ENCODE measurements at regions of chr5 and their contacts with region 1.

Region 1: GRCh38 chr5:43019614-43020293 is 20.4 kb downstream of the ANXA2R start:
- DNase-seq: peak; percentile 90
- H3K4me3 Mint-ChIP-seq: peak overlapping the region; percentile 97
- H3K27ac Mint-ChIP-seq: peak overlapping the region; percentile 99
- H3K4me1 Mint-ChIP-seq: peaks cover 37% of the 10 kb centered on the region
- H3K27me3 Mint-ChIP-seq: no peaks in the 10 kb centered on the region

Region 2: DNA sequence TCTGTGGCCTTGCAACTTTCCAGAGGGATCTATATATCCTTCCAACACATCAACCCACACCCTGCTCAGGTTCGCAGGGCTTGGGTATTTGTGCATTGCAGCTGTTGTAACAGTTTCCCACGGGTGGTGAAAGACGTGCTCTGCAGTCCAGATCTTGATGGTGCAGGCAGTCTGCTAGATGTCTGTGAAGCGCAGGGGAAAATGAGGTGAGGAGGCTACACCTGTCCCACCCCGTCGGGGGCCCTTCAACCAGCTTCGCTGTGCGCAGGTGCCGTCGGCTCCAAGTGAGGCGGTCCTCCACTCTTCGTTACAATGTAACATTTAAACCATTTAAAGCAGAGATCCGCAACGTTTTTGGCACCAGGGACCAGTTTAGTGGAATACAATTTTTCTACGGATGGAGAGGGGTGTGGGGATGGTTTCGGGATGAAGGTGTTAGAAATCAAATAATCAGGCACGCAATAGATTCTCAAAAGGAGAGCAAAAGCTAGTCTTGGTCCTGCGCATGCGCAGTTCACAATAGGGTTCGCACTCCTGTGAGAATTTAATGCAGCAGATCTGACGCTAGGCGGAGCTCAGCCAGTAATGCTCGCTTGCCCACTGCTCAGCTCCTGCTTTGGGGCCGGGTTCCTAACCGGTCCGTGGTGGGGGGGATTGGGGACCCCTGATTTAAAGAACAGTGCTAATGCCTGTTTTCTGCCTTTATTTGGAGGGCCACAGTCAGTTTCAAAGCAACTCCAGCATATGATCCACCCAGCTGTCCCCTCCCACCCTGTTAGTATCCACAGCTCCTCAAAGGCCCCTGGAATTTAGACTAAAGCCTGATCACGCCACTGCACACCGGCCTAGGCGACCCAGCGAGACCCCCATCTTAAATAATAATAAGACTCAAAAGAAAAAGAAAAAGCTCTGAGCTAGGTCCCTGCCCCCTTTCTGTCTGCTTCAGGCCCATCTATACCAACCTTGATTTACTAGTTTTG is 111.0 kb before region 1 on chr5:
- CTCF ChIA-PET with region 1: interaction called, 15 read pairs
- intact Hi-C with region 1: loop called (anchors 1 kb)
- DNase-seq: peak; percentile 94
- H3K4me3 Mint-ChIP-seq: peak overlapping the region; percentile 92
- H3K27ac Mint-ChIP-seq: peak overlapping the region; percentile 75
- H3K4me1 Mint-ChIP-seq: peaks cover 10% of the 10 kb centered on the region
- H3K27me3 Mint-ChIP-seq: peaks cover 10% of the 10 kb centered on the region

Region 3: GRCh38 chr5:43034591-43034968 is 14.8 kb after region 1 on chr5:
- CTCF ChIA-PET with region 1: interaction called, 57 read pairs
- intact Hi-C with region 1: loop called (anchors 1 kb)
- DNase-seq: no peak
- H3K4me3 Mint-ChIP-seq: no peak overlapping the region
- H3K27ac Mint-ChIP-seq: no peak overlapping the region
- H3K4me1 Mint-ChIP-seq: peaks cover 39% of the 10 kb centered on the region
- H3K27me3 Mint-ChIP-seq: no peaks in the 10 kb centered on the region